B cell (primary cell): ENCODE measurements at regions of chr3 and their contacts with region 1.

Region 1: GRCh38 chr3:115836944-115837343 is 213.6 kb downstream of the GAP43 start:
- DNase-seq: peak; percentile 13
- ATAC-seq: no peak
- H3K4me3 ChIP-seq: no peak overlapping the region
- H3K4me3 Mint-ChIP-seq: no peak overlapping the region
- H3K27ac ChIP-seq: no peak overlapping the region
- H3K27ac Mint-ChIP-seq: no peak overlapping the region
- H3K4me1 ChIP-seq: no peaks in the 10 kb centered on the region
- H3K4me1 Mint-ChIP-seq: no peaks in the 10 kb centered on the region
- H3K27me3 ChIP-seq: peaks cover 0 to 4% (median 0%) of the 10 kb centered on the region in 4 experiments
- H3K27me3 Mint-ChIP-seq: peaks cover 3% of the 10 kb centered on the region
- CTCF ChIP-seq: peak; percentile 70

Region 2: GRCh38 chr3:115819785-115820384 is 17.1 kb before region 1 on chr3:
- CTCF ChIA-PET with region 1: interaction called, 29 read pairs
- POLR2A ChIA-PET with region 1: no interaction called
- intact Hi-C with region 1: no loop called
- DNase-seq: peak; percentile 84
- ATAC-seq: peak; percentile 90
- H3K4me3 ChIP-seq: no peak overlapping the region
- H3K4me3 Mint-ChIP-seq: no peak overlapping the region
- H3K27ac ChIP-seq: no peak overlapping the region
- H3K27ac Mint-ChIP-seq: no peak overlapping the region
- H3K4me1 ChIP-seq: no peaks in the 10 kb centered on the region
- H3K4me1 Mint-ChIP-seq: no peaks in the 10 kb centered on the region
- H3K27me3 ChIP-seq: no peaks in the 10 kb centered on the region
- H3K27me3 Mint-ChIP-seq: no peaks in the 10 kb centered on the region
- CTCF ChIP-seq: peak; percentile 99

Region 3: DNA sequence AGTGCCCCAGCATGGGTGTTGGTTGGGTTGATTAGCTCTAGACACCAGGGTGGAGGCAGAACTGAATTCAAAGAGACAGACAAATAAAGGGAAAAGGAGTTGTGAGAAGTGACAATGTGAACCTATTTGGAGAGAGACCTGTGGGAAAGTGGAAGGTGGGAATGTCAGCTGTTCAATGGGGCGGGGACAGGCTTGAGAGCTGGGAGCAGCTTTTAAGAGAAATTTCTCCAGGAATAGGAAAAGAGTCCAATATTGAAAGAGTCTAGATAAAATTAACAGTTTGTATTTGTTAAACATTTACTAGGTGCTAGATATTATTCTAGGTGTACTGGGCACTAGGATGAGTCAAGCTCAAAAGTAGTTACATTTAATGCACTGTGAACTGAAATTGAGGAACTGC is 11.7 kb after region 1 on chr3:
- CTCF ChIA-PET with region 1: interaction called, 17 read pairs
- POLR2A ChIA-PET with region 1: no interaction called
- intact Hi-C with region 1: no loop called
- DNase-seq: no peak
- ATAC-seq: no peak
- H3K4me3 ChIP-seq: no peak overlapping the region
- H3K4me3 Mint-ChIP-seq: no peak overlapping the region
- H3K27ac ChIP-seq: no peak overlapping the region
- H3K27ac Mint-ChIP-seq: no peak overlapping the region
- H3K4me1 ChIP-seq: no peaks in the 10 kb centered on the region
- H3K4me1 Mint-ChIP-seq: no peaks in the 10 kb centered on the region
- H3K27me3 ChIP-seq: no peaks in the 10 kb centered on the region
- H3K27me3 Mint-ChIP-seq: peaks cover 3% of the 10 kb centered on the region
- CTCF ChIP-seq: no peak